BJ (cell line): ENCODE measurements at regions of chr5 and their contacts with region 1.

Region 1: DNA sequence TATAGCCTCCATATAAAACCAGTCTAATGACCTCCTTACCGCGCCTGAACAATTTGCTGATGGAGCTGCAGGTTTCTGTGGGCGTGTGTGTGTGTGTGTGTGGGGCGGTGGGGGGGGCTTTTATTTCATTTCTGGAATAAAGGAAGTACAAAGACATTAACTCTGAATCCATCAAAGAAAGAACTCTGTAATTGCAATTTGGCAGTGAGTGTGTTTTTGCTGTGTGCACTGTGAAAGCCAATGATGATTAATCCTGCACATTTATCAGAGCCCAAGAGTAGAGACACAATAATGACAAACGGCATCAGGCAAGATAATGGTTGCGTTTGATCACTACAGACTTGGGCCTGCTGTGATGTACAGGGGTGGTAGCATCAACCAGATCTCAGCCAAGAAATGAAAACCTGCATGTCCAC is 29.3 kb upstream of the NDFIP1 start:
- DNase-seq: no peak
- H3K4me3 ChIP-seq: no peak overlapping the region
- H3K27me3 ChIP-seq: peaks cover 8% of the 10 kb centered on the region
- CTCF ChIP-seq: no peak

Region 2: DNA sequence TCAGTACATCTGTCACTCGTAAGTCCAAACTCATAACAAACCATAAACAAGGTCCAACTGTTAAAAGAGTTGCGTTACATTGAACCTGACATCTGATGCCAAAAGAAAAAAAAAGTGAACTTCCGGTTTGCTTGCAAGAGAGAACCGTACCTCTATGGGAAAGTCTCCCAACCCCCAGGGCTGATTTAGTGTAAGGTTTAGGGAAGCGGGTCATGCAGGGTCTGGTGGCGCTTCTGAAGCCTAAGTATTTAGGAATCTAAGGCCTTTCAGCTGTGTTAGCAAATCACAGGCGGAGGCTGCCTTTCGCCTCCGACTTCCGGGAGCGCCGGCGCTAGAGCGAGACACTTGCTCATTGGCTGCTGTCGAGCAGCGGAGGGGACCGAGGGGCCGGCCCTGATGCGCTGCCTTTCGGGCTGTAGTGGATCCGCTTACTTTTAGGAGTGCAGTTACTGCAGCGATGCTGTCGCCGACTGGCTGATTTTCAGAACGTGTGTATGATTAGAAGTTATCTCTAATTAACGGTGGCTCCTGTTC is 54.5 kb before region 1 on chr5:
- CTCF ChIA-PET with region 1: no interaction called
- POLR2A ChIA-PET with region 1: interaction called, 10 read pairs
- DNase-seq: peak; percentile 49
- H3K4me3 ChIP-seq: peak overlapping the region; percentile 41
- H3K27me3 ChIP-seq: no peaks in the 10 kb centered on the region
- CTCF ChIP-seq: no peak

Region 3: DNA sequence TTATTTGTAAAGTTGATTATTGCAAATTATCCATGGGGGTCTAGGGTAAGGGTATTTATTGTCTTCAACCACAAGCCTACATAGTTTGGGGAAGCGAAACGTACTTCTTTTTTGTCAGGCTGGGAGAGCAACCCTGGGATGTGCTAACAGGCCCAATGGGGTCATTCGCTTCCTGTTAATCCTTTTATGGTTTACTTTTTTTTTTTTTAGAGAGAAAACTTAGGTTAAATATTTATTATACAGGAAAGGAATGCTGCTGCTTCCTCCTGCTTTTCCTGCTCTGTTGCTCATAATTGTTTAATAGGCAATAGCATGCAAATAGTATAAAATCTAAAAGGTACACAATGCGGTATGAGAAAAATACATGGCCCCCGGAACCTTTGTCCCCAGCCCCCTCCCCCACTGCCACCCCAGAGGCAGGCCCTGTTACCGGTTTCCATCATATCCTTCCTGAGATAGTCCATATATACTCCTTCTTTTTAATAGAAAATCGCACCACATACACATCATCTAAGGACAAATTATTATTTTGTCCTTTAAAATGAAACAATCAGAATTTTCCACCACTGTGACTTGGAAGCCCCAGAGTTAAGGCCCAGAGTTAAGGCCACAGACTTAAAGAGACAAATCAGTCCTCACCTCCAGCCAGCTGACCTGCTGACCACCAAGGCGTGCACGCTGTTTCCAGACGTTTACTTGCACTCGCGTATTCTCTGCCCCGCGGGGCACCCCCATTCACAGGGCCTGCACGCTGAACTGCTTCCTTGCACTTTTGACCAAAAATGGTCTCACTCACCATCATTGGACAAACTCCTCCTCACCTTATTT is 113.2 kb after region 1 on chr5:
- CTCF ChIA-PET with region 1: no interaction called
- POLR2A ChIA-PET with region 1: no interaction called
- DNase-seq: no peak
- H3K4me3 ChIP-seq: no peak overlapping the region
- H3K27me3 ChIP-seq: no peaks in the 10 kb centered on the region
- CTCF ChIP-seq: no peak